PC-3 (cell line): ENCODE measurements at regions of chr6 and their contacts with region 1.

Region 1: DNA sequence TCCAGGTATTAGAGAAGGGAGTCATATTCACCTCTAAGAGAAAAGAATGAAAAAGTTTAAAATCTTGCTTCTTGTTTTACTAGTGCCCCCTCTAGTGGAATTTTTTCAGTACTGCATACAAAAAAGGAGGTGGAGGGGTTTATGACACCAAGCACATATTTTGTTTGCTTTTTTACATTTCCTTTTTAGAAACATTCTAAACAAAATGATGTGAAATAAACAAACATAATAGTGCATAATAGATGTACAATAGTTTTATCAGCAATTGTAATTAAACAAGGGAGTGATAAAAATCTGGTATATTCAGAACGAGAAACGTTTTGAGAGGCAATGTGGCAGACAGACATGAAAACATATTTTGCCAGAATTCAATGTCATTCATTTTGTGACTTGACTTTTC is 111.0 kb upstream of the TFAP2D start:
- DNase-seq: peak; percentile 76
- ATAC-seq: no peak
- H3K4me3 ChIP-seq: no peak overlapping the region
- H3K27ac ChIP-seq: no peak overlapping the region
- H3K4me1 ChIP-seq: no peaks in the 10 kb centered on the region
- H3K27me3 ChIP-seq: peaks cover 42% of the 10 kb centered on the region; the same call in 1 of the 2 replicates
- CTCF ChIP-seq: peak; percentile 88

Region 2: GRCh38 chr6:50128420-50129005 is 473.8 kb before region 1 on chr6:
- CTCF ChIA-PET with region 1: no interaction called
- POLR2A ChIA-PET with region 1: no interaction called
- intact Hi-C with region 1: loop called (anchors 1 kb)
- DNase-seq: peak; percentile 49
- ATAC-seq: no peak
- H3K4me3 ChIP-seq: no peak overlapping the region
- H3K27ac ChIP-seq: no peak overlapping the region
- H3K4me1 ChIP-seq: no peaks in the 10 kb centered on the region
- H3K27me3 ChIP-seq: peaks cover 61% of the 10 kb centered on the region
- CTCF ChIP-seq: peak; percentile 56

Region 3: DNA sequence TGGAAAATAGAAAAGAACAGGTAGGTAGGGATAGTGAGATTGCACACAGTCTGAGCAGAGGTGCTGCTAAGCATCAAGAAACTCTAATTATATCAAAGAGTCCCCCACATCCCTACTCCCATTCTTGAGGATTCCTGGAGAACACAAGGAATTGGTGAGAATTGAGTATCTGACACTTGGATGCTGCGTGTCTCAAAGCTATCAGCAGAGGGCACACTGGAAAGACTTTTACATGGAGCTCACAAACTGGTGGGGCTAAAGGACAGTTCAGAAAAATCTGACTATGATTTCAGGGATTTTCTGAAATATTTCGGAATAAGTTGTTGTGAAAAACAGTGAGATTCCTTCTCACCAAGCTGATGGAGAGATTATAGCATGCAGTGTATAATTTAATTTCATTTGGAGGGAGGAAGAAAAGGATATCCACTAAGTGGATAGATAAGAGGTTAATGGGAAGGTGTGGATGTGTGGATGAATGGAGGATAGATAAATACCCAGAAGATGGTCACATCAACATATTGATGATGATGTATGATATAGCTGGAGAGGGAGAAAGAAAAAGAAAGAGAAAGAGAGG is 337.2 kb before region 1 on chr6:
- CTCF ChIA-PET with region 1: no interaction called
- POLR2A ChIA-PET with region 1: no interaction called
- intact Hi-C with region 1: loop called (anchors 10 kb)
- DNase-seq: peak; percentile 42
- ATAC-seq: no peak; the same call in 1 of the 2 replicates
- H3K4me3 ChIP-seq: no peak overlapping the region
- H3K27ac ChIP-seq: no peak overlapping the region
- H3K4me1 ChIP-seq: no peaks in the 10 kb centered on the region
- H3K27me3 ChIP-seq: peaks cover 23% of the 10 kb centered on the region
- CTCF ChIP-seq: peak; percentile 63

Region 4: DNA sequence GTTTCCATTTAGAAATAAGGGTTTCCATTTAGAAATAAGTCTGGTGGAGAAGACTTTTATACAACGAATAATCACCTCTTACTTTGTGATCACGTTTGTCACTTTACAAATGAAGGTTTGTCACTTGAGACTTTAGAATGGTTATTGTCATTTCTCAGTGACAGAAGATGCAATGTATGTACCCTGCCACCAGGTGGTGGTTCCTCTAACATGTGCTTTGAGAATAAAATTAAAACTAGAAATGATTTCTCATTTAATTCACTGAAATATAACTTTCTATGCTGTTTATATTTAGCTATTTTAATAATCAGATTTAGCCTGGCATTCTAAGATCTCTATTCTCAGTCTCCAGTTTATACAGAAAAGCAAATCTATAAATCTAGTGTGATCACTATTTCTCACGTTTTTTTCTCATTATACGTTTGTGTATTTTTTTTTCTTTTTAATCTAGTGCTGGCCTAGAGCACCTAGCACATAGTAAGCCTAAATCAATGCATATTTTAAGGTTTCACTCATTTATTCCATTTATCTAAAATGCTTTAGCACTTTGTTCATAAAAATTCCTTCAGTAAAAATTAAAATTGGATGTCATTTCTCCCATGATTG is 53.7 kb after region 1 on chr6:
- CTCF ChIA-PET with region 1: no interaction called
- POLR2A ChIA-PET with region 1: no interaction called
- intact Hi-C with region 1: no loop called
- DNase-seq: peak; percentile 39
- ATAC-seq: no peak
- H3K4me3 ChIP-seq: no peak overlapping the region
- H3K27ac ChIP-seq: no peak overlapping the region
- H3K4me1 ChIP-seq: peaks cover 28% of the 10 kb centered on the region
- H3K27me3 ChIP-seq: no peaks in the 10 kb centered on the region
- CTCF ChIP-seq: peak; percentile 74

Region 5: DNA sequence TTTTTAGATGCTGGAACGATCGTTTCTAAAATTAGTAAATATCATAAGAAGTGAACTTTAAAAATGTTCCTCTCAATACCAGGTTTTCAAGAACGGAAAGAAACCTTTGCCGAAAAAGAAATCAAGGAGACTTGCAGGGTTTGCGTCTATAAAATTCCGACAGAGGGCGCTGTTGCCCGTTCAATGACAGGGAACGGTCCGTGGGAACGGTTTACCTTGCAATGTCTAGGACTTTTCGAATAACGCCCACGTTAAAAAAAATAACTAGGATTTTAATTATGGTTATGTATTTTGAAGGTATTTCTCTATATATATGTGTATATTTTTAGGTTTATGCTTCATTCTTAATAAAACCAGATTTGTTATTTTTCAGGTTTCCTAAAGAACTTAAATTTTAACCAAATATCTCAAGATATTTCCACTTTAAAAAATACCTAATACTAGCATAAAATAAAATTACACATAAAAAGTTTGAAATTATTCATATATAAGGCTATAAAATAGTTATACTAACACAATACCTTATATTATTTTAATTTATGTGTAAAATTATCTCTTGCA is 213.9 kb after region 1 on chr6:
- CTCF ChIA-PET with region 1: no interaction called
- POLR2A ChIA-PET with region 1: no interaction called
- intact Hi-C with region 1: no loop called
- DNase-seq: peak; percentile 91
- ATAC-seq: peak; percentile 87
- H3K4me3 ChIP-seq: peak overlapping the region; percentile 92
- H3K27ac ChIP-seq: no peak overlapping the region
- H3K4me1 ChIP-seq: peaks cover 8% of the 10 kb centered on the region; the same call in 1 of the 2 replicates
- H3K27me3 ChIP-seq: peaks cover 18% of the 10 kb centered on the region
- CTCF ChIP-seq: peak; percentile 77